ENCODE measurements at regions of chr16 and their contacts with region 1.

Region 1: GRCh38 chr16:49556606-49557446 is 183.2 kb downstream of the C16orf78 start:
- DNase-seq: peak; percentile 43 to 75
- H3K4me3 ChIP-seq: peak overlapping the region in 3 of 4 experiments; percentile 24 to 50 (median 38); a peak in 6 of 8 replicates
- H3K27ac ChIP-seq: 0 out of 2 replicates have a peak overlapping the region, but pooled peaks have one; percentile 39
- H3K4me1 ChIP-seq: peaks cover 9 to 25% (median 19%) of the 10 kb centered on the region in 4 experiments
- H3K27me3 ChIP-seq: no peaks in the 10 kb centered on the region; a peak in 2 of 7 replicates
- CTCF ChIP-seq: peak; percentile 15 to 79 (median 65)
- EP300 ChIP-seq: peak in 1 of 2 experiments; percentile 58; a peak in 1 of 3 replicates
- POLR2A ChIP-seq: no peak; a peak in 1 of 3 replicates
- RAD21 ChIP-seq: peak; percentile 51 to 68

Region 2: DNA sequence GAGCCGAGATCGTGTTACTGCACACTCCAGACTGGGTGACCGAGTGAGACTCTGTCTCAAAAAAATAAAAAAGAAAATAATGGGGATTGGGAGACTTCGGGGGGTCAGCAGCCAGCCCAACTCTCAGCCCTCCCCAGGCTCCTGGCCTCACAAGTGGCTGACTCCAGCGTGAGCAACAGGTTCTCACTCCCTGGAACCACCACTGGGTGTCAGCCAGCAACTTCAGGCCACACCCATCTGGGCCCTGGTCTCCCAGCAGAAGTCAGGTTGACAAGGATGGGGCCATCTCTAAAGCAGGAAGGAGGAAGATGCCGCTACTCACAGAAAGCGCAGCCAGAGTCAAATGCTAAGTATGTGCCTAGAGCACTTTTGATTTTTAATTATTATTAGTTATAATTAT is 43.8 kb before region 1 on chr16:
- CTCF ChIA-PET with region 1: interaction called, 14 read pairs
- POLR2A ChIA-PET with region 1: no interaction called
- DNase-seq: no peak
- H3K4me3 ChIP-seq: no peak overlapping the region
- H3K27ac ChIP-seq: no peak overlapping the region
- H3K4me1 ChIP-seq: no peaks in the 10 kb centered on the region
- H3K27me3 ChIP-seq: no peaks in the 10 kb centered on the region
- CTCF ChIP-seq: peak; percentile 53 to 61 (median 61)
- EP300 ChIP-seq: no peak
- POLR2A ChIP-seq: no peak
- RAD21 ChIP-seq: peak; percentile 65 to 77

Region 3: DNA sequence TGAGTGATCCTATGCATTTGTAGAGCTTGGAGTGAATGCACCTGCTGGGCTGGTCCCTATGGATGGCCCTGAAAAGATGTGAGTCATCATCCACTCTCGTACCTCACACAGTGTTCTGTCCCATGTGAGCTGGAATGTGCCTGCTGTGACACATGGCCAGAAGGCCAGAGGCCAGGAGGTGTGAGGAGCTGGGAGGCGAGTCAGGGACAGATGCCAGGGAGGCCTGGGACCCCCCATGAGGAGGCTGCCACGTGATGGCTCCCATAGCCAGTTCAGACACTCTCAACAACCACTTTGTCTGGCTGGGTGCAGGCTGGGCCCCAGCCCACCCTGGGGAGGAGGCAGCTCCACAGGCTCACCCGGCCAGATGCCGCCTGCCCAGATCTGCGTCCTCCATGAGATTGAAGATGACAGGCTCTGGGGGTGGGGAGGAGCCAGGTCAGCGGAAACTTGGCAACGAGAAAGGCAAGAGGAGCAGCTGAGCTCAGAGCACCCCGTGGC is 14.4 kb before region 1 on chr16:
- CTCF ChIA-PET with region 1: interaction called, 58 read pairs
- POLR2A ChIA-PET with region 1: interaction called, 3 read pairs
- DNase-seq: no peak
- H3K4me3 ChIP-seq: no peak overlapping the region
- H3K27ac ChIP-seq: no peak overlapping the region
- H3K4me1 ChIP-seq: peaks cover 0 to 18% (median 10%) of the 10 kb centered on the region in 4 experiments; a peak in 5 of 7 replicates
- H3K27me3 ChIP-seq: no peaks in the 10 kb centered on the region
- CTCF ChIP-seq: no peak
- EP300 ChIP-seq: no peak
- POLR2A ChIP-seq: no peak
- RAD21 ChIP-seq: no peak

Region 4: DNA sequence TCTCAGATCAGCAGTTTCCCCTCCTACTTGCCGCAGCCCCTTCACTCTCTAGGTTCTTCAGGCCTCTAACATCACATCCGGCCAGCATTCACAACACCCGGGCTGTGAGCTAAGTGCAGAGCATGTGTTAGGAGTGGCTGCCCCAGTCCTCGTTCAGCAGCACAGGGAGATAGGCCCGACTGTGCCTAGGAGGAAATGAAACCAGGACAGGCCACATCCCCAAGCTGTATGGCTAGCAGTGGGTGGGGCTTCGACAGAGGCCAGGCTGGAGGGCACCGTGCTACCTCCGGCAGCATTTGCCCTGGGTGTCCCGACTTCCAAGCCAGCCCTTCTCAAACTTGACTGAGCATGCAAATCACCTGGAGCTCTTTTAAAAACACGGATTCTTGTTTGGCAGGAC is 18.6 kb after region 1 on chr16:
- CTCF ChIA-PET with region 1: interaction called, 53 read pairs
- POLR2A ChIA-PET with region 1: interaction called, 3 read pairs
- DNase-seq: peak in 1 of 2 experiments; percentile 50
- H3K4me3 ChIP-seq: no peak overlapping the region
- H3K27ac ChIP-seq: no peak overlapping the region
- H3K4me1 ChIP-seq: peaks cover 4 to 17% (median 6%) of the 10 kb centered on the region in 4 experiments; a peak in 5 of 7 replicates
- H3K27me3 ChIP-seq: no peaks in the 10 kb centered on the region
- CTCF ChIP-seq: no peak
- EP300 ChIP-seq: no peak
- POLR2A ChIP-seq: no peak
- RAD21 ChIP-seq: no peak

Region 5: GRCh38 chr16:49580751-49581303 is 24.0 kb after region 1 on chr16:
- CTCF ChIA-PET with region 1: interaction called, 46 read pairs
- POLR2A ChIA-PET with region 1: interaction called, 3 read pairs
- DNase-seq: no peak
- H3K4me3 ChIP-seq: no peak overlapping the region
- H3K27ac ChIP-seq: no peak overlapping the region
- H3K4me1 ChIP-seq: peaks cover 2 to 13% (median 7%) of the 10 kb centered on the region in 4 experiments; a peak in 5 of 7 replicates
- H3K27me3 ChIP-seq: no peaks in the 10 kb centered on the region
- CTCF ChIP-seq: no peak
- EP300 ChIP-seq: no peak
- POLR2A ChIP-seq: no peak
- RAD21 ChIP-seq: no peak

Region 6: GRCh38 chr16:49716339-49716934 is 159.6 kb after region 1 on chr16:
- CTCF ChIA-PET with region 1: no interaction called
- POLR2A ChIA-PET with region 1: no interaction called
- DNase-seq: no peak
- H3K4me3 ChIP-seq: no peak overlapping the region
- H3K27ac ChIP-seq: no peak overlapping the region
- H3K4me1 ChIP-seq: peaks cover 0 to 17% (median 2%) of the 10 kb centered on the region in 4 experiments; a peak in 5 of 7 replicates
- H3K27me3 ChIP-seq: no peaks in the 10 kb centered on the region
- CTCF ChIP-seq: no peak
- EP300 ChIP-seq: no peak
- POLR2A ChIP-seq: no peak
- RAD21 ChIP-seq: no peak

Measured in H1 (cell line).